Naive thymus-derived CD4-positive, alpha-beta T cell (primary cell): ENCODE measurements at regions of chr14 and their contacts with region 1.

Region 1: DNA sequence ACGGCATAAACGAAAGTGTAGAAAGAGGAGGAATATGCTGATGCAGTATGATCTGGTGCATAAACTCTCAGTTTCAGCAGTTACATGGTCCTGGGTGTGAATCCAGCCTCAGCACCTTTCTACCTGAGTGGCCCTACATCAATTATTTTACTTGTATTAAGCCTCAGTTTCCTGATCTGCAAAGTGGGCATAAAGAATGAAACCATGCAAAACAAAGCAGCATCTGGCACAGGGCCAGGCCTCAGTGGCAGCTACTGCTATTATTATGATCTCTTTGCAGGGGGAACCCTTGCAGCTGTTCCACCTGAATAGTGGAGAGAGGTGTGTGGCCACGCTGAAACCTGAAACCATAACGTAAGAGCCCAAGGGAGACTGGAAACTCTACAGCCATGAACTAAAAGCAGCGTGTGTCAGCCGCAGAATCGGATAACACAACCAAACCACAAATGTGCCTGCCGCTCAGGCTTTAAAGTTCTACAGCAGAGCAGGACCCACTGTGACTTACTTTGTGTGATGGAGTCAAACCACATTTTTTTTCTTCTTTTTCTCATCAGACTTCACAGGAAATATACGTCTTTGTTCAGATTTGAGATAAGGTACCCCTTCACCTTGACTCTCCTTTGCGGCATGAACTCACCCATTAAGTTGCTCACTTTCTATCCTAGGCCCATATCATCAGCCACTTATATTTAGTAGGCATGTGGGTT is 29.2 kb upstream of the FOS start:
- DNase-seq: peak; percentile 46 to 96 (median 93)
- ATAC-seq: peak; percentile 86
- H3K4me3 ChIP-seq: peak overlapping the region; percentile 48
- H3K4me3 Mint-ChIP-seq: peak overlapping the region; percentile 58 to 83 (median 67)
- H3K27ac ChIP-seq: peak overlapping the region; percentile 81
- H3K27ac Mint-ChIP-seq: peak overlapping the region; percentile 83 to 98 (median 96)
- H3K4me1 ChIP-seq: peaks cover 51 to 61% of the 10 kb centered on the region in 2 donors
- H3K4me1 Mint-ChIP-seq: peaks cover 39 to 81% (median 72%) of the 10 kb centered on the region in 7 donors
- H3K27me3 ChIP-seq: no peaks in the 10 kb centered on the region
- H3K27me3 Mint-ChIP-seq: peaks cover 0 to 57% (median 0%) of the 10 kb centered on the region in 5 donors

Region 2: GRCh38 chr14:74762917-74763802 is 486.2 kb before region 1 on chr14 and contains the start of gene YLPM1:
- CTCF ChIA-PET with region 1: no interaction called
- POLR2A ChIA-PET with region 1: no interaction called
- intact Hi-C with region 1: loop called in 1 of 2 experiments (anchors 10 kb)
- DNase-seq: peak; percentile 79 to 97 (median 95)
- ATAC-seq: peak; percentile 98
- H3K4me3 ChIP-seq: peak within 1 kb of the TSS; percentile 58
- H3K4me3 Mint-ChIP-seq: peak within 1 kb of the TSS; percentile 86 to 99 (median 95)
- H3K27ac ChIP-seq: peak within 1 kb of the TSS; percentile 93
- H3K27ac Mint-ChIP-seq: peak within 1 kb of the TSS; percentile 87 to 97 (median 95)
- H3K4me1 ChIP-seq: peaks cover 31 to 38% of the 10 kb centered on the region in 2 donors
- H3K4me1 Mint-ChIP-seq: peaks cover 43 to 56% (median 49%) of the 10 kb centered on the region in 7 donors
- H3K27me3 ChIP-seq: no peaks in the 10 kb centered on the region
- H3K27me3 Mint-ChIP-seq: peaks cover 0 to 2% (median 0%) of the 10 kb centered on the region in 5 donors
- total RNA-seq, gene YLPM1: 84.7 to 119 (median 109) TPM

Region 3: DNA sequence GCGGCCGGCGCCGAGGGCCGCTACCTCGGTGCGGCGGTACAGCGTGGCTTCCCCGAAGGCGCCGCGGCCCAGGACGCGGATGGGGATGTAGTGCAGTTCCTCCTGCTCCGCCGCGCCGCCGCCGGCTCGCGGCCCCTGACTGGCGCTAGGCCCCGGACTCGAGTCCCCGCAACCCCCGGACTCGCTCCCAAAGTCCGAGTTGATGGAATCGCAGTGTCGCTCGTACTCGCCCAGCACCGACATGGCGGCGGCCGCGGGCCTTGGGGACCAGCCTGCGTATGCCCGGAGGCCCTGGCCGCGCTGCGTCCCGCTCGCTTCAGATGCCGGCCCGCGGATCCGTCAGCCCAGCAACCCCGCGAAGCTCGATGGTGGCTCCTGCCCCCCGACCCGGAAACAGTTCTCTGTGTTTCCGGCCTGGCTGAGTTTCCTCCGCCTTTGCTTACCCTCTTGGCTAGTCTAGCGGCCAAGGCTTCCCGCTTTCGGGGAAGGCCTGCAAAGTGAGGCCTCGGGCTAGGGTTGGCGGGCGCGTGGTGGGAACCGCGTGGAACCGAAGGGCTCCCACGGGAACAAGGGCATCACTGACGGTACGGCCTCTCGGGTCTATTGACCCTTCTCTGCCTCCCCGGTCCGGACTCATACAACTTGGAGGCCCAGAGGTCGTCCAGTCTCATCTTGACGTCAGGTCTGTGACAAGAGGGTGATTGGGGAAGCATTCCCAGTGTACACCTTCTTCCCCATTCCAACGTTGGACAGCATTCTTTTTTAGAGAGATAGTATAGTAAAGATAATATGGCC is 122.5 kb before region 1 on chr14 and contains the start of gene NEK9:
- CTCF ChIA-PET with region 1: no interaction called
- POLR2A ChIA-PET with region 1: interaction called, 3 read pairs
- intact Hi-C with region 1: loop called (anchors 1 to 2 kb)
- DNase-seq: peak; percentile 78 to 91 (median 87)
- ATAC-seq: peak; percentile 92
- H3K4me3 ChIP-seq: peak within 1 kb of the TSS; percentile 87
- H3K4me3 Mint-ChIP-seq: peak within 1 kb of the TSS; percentile 87 to 99 (median 96)
- H3K27ac ChIP-seq: peak within 1 kb of the TSS; percentile 89
- H3K27ac Mint-ChIP-seq: peak within 1 kb of the TSS; percentile 95 to 98 (median 98)
- H3K4me1 ChIP-seq: peaks cover 22 to 29% of the 10 kb centered on the region in 2 donors
- H3K4me1 Mint-ChIP-seq: peaks cover 36 to 48% (median 44%) of the 10 kb centered on the region in 7 donors
- H3K27me3 ChIP-seq: no peaks in the 10 kb centered on the region
- H3K27me3 Mint-ChIP-seq: no peaks in the 10 kb centered on the region
- total RNA-seq, gene NEK9: 81.7 to 141 (median 84.7) TPM

Region 4: GRCh38 chr14:75278422-75279161 is 29.2 kb after region 1 on chr14 and contains the start of gene FOS:
- CTCF ChIA-PET with region 1: interaction called, 10 read pairs
- POLR2A ChIA-PET with region 1: interaction called, 6 read pairs
- intact Hi-C with region 1: loop called (anchors 1 kb)
- DNase-seq: peak; percentile 87 to 99 (median 98)
- ATAC-seq: peak; percentile 74
- H3K4me3 ChIP-seq: peak within 1 kb of the TSS; percentile 86
- H3K4me3 Mint-ChIP-seq: peak within 1 kb of the TSS; percentile 92 to 97 (median 94)
- H3K27ac ChIP-seq: peak within 1 kb of the TSS; percentile 91
- H3K27ac Mint-ChIP-seq: peak within 1 kb of the TSS; percentile 87 to 100 (median 99)
- H3K4me1 ChIP-seq: peaks cover 32 to 34% of the 10 kb centered on the region in 2 donors
- H3K4me1 Mint-ChIP-seq: peaks cover 21 to 64% (median 50%) of the 10 kb centered on the region in 7 donors
- H3K27me3 ChIP-seq: peaks cover 4 to 5% of the 10 kb centered on the region in 2 donors
- H3K27me3 Mint-ChIP-seq: peaks cover 0 to 81% (median 3%) of the 10 kb centered on the region in 5 donors
- total RNA-seq, gene FOS: 9.4 to 4,557 (median 14.4) TPM

Region 5: DNA sequence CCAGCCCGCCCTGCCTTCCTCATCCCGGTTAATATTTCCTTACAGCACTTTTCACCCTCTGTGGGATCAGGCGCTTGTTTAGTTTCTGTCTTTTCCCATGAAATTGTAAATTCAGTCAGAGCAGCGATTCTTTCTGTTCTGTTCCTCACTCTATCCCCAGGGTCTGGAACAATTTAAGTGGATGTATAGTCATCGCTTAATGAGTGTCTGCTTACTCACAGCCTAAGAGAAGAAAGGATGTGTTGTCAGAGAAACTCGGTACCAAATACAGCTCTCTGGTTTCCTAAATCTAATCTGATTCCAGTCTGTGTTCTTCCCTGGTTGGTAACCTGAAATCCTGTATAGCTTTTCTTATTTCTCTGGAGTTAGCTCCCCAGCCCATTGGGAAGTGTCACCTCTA is 74.2 kb after region 1 on chr14:
- CTCF ChIA-PET with region 1: no interaction called
- POLR2A ChIA-PET with region 1: no interaction called
- intact Hi-C with region 1: no loop called
- DNase-seq: no peak
- ATAC-seq: no peak
- H3K4me3 ChIP-seq: no peak overlapping the region
- H3K4me3 Mint-ChIP-seq: no peak overlapping the region
- H3K27ac ChIP-seq: no peak overlapping the region
- H3K27ac Mint-ChIP-seq: no peak overlapping the region
- H3K4me1 ChIP-seq: no peaks in the 10 kb centered on the region
- H3K4me1 Mint-ChIP-seq: peaks cover 0 to 6% (median 0%) of the 10 kb centered on the region in 7 donors
- H3K27me3 ChIP-seq: no peaks in the 10 kb centered on the region
- H3K27me3 Mint-ChIP-seq: peaks cover 0 to 30% (median 0%) of the 10 kb centered on the region in 5 donors

Region 6: GRCh38 chr14:75399821-75400678 is 150.6 kb after region 1 on chr14:
- CTCF ChIA-PET with region 1: no interaction called
- POLR2A ChIA-PET with region 1: no interaction called
- intact Hi-C with region 1: no loop called
- DNase-seq: no peak
- ATAC-seq: peak; percentile 52
- H3K4me3 ChIP-seq: no peak overlapping the region
- H3K4me3 Mint-ChIP-seq: peak overlapping the region in 1 of 10 donors; percentile 24
- H3K27ac ChIP-seq: no peak overlapping the region
- H3K27ac Mint-ChIP-seq: peak overlapping the region in 1 of 9 donors; percentile 15
- H3K4me1 ChIP-seq: no peaks in the 10 kb centered on the region
- H3K4me1 Mint-ChIP-seq: peaks cover 0 to 23% (median 0%) of the 10 kb centered on the region in 7 donors
- H3K27me3 ChIP-seq: no peaks in the 10 kb centered on the region
- H3K27me3 Mint-ChIP-seq: peaks cover 0 to 21% (median 0%) of the 10 kb centered on the region in 5 donors

Region 7: GRCh38 chr14:75542588-75543091 is 293.2 kb after region 1 on chr14:
- CTCF ChIA-PET with region 1: no interaction called
- POLR2A ChIA-PET with region 1: no interaction called
- intact Hi-C with region 1: loop called in 1 of 2 experiments (anchors 1 kb)
- DNase-seq: peak; percentile 42 to 85 (median 65)
- ATAC-seq: peak; percentile 95
- H3K4me3 ChIP-seq: peak overlapping the region; percentile 48
- H3K4me3 Mint-ChIP-seq: peak overlapping the region; percentile 75 to 89 (median 80)
- H3K27ac ChIP-seq: peak overlapping the region; percentile 90
- H3K27ac Mint-ChIP-seq: peak overlapping the region; percentile 94 to 97 (median 96)
- H3K4me1 ChIP-seq: peaks cover 30 to 43% of the 10 kb centered on the region in 2 donors
- H3K4me1 Mint-ChIP-seq: peaks cover 27 to 68% (median 59%) of the 10 kb centered on the region in 7 donors
- H3K27me3 ChIP-seq: no peaks in the 10 kb centered on the region
- H3K27me3 Mint-ChIP-seq: no peaks in the 10 kb centered on the region